ENCODE measurements at regions of chr1 and their contacts with region 1.

Region 1: GRCh38 chr1:228464487-228464983 is 22.6 kb upstream of the RNF187 start:
- DNase-seq: peak; percentile 39
- ATAC-seq: peak; percentile 91
- H3K4me3 Mint-ChIP-seq: peak overlapping the region; percentile 75
- H3K27ac Mint-ChIP-seq: peak overlapping the region; percentile 68
- H3K4me1 Mint-ChIP-seq: peaks cover 24% of the 10 kb centered on the region
- H3K27me3 Mint-ChIP-seq: peaks cover 74% of the 10 kb centered on the region
- CTCF ChIP-seq: no peak

Region 2: GRCh38 chr1:229430761-229431283 is 966.3 kb after region 1 on chr1:
- CTCF ChIA-PET with region 1: no interaction called
- POLR2A ChIA-PET with region 1: no interaction called
- intact Hi-C with region 1: loop called (anchors 5 kb)
- DNase-seq: no peak
- ATAC-seq: peak; percentile 37
- H3K4me3 Mint-ChIP-seq: peak overlapping the region; percentile 77
- H3K27ac Mint-ChIP-seq: no peak overlapping the region
- H3K4me1 Mint-ChIP-seq: peaks cover 18% of the 10 kb centered on the region
- H3K27me3 Mint-ChIP-seq: peaks cover 62% of the 10 kb centered on the region
- CTCF ChIP-seq: no peak